B cell (primary cell): ENCODE measurements at regions of chr13 and their contacts with region 1.

Region 1: DNA sequence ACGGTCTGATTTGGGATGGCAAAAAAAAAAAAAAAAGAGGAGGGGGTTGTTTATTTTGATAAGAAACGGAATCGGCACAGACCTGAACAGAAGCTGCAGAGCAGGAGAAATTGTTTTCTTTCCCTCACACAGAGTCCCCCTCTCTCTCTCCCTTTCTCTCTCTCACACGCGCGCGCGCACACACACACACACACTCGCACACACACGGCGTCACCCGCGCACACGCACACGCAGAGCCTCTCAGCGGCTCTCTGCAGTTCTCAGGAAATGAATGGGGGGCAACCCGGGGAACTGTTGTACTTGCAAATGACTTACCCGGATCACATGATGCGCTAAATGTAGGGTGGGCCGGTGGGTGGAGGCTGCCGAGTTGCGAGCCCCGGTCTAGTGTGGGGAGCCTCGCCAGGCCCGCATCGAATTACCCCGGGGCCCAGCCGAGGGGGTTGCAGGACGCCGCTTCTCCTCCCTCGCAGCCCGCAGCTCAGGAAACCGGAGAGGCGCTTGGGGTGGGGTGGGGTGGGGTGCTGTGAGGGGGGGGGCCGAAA is 475 bp downstream of the KLF12 start:
- DNase-seq: peak; percentile 97
- ATAC-seq: peak; percentile 53
- H3K4me3 ChIP-seq: peak overlapping the region; percentile 78 to 91 (median 81)
- H3K4me3 Mint-ChIP-seq: peak overlapping the region; percentile 99
- H3K27ac ChIP-seq: peak overlapping the region; percentile 87 to 95
- H3K27ac Mint-ChIP-seq: peak overlapping the region; percentile 100
- H3K4me1 ChIP-seq: peaks cover 33 to 35% of the 10 kb centered on the region in 2 donors
- H3K4me1 Mint-ChIP-seq: peaks cover 39% of the 10 kb centered on the region
- H3K27me3 ChIP-seq: no peaks in the 10 kb centered on the region
- H3K27me3 Mint-ChIP-seq: no peaks in the 10 kb centered on the region
- CTCF ChIP-seq: no peak

Region 2: DNA sequence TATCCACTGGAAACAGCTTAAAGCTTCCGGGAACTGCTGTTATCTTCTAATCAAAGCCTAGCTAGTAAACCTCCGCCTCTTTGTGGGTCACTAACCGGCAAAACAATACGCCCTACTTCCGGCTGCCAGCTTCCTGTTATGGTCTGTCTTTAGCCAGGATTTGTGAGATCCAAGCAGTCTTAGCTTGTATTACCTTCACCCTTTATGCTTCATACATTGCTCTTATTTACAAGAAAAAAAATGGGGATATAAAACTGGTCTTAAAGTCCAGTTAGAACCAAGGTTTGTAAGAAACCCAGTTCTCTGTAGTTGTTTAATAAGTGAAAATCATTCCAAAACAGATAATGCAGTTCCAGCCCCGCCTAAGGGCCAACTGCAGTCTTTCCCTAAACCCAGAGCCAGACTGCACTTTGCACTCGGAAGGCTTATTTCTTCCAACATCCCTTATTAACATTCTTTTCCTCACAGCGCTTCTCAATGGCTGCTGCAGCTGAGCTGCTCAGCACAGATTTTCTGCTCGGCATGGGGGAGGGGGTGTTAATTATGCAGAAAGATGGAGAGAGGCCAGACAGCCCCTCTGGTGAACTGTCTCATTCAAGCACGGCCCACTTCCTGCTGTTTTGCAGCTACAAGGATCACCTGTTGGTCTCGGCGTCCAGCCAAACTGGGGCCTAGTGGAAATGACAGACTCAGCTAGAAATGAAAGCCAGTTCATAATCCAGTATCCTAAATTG is 367.9 kb before region 1 on chr13:
- CTCF ChIA-PET with region 1: interaction called, 3 read pairs
- POLR2A ChIA-PET with region 1: interaction called, 5 read pairs
- intact Hi-C with region 1: loop called (anchors 2 kb)
- DNase-seq: peak; percentile 65
- ATAC-seq: peak; percentile 79
- H3K4me3 ChIP-seq: peak overlapping the region in 4 of 5 experiments; percentile 0 to 43 (median 16)
- H3K4me3 Mint-ChIP-seq: peak overlapping the region; percentile 78
- H3K27ac ChIP-seq: peak overlapping the region; percentile 83 to 92
- H3K27ac Mint-ChIP-seq: peak overlapping the region; percentile 94
- H3K4me1 ChIP-seq: peaks cover 51 to 60% of the 10 kb centered on the region in 2 donors
- H3K4me1 Mint-ChIP-seq: peaks cover 71% of the 10 kb centered on the region
- H3K27me3 ChIP-seq: no peaks in the 10 kb centered on the region
- H3K27me3 Mint-ChIP-seq: no peaks in the 10 kb centered on the region
- CTCF ChIP-seq: no peak

Region 3: DNA sequence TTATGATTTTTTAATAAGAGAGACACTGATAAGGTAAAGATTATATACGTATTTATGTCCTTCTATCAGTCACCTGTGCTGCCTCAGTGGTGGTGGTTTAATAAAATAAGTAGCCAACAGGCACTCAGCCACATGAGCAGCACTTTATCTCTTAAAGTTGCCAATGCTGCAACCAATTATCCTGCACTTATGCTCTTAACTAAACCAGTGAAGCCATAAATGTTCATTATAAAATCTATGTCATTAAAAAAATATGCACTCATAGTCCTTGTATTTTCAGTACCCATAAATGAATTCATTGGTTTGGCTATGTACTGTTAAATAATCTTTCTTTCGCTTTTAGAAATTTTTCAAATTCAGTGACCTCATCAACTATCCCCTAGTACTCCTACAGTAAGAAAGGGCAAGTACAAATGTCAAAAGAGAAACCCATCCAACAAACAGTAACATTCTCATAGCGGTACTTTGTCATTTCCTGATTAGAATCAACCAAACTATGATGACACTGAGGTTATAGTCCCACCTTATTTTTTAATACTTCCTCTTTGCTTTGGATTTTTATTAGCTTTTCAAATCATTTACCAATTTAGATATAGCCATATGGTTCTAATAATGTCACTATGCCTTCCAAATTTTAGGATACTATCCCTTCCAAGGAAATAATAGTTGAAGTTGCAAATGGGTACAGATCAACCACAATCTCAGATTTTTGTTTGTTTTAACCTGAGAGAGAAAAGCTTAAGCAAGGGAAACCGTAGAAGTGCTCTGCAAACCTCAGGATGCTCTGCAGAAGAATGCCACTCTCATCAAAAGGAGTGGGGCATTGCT is 190.4 kb before region 1 on chr13:
- CTCF ChIA-PET with region 1: no interaction called
- POLR2A ChIA-PET with region 1: no interaction called
- intact Hi-C with region 1: loop called (anchors 5 kb)
- DNase-seq: peak; percentile 20
- ATAC-seq: peak; percentile 81
- H3K4me3 ChIP-seq: no peak overlapping the region
- H3K4me3 Mint-ChIP-seq: peak overlapping the region; percentile 6
- H3K27ac ChIP-seq: no peak overlapping the region
- H3K27ac Mint-ChIP-seq: peak overlapping the region; percentile 8
- H3K4me1 ChIP-seq: peaks cover 0 to 3% of the 10 kb centered on the region in 2 donors
- H3K4me1 Mint-ChIP-seq: peaks cover 53% of the 10 kb centered on the region
- H3K27me3 ChIP-seq: no peaks in the 10 kb centered on the region
- H3K27me3 Mint-ChIP-seq: no peaks in the 10 kb centered on the region
- CTCF ChIP-seq: no peak

Region 4: GRCh38 chr13:74026753-74027152 is 107.0 kb before region 1 on chr13:
- CTCF ChIA-PET with region 1: no interaction called
- POLR2A ChIA-PET with region 1: interaction called, 5 read pairs
- intact Hi-C with region 1: loop called (anchors 10 kb)
- DNase-seq: peak; percentile 75
- ATAC-seq: peak; percentile 93
- H3K4me3 ChIP-seq: peak overlapping the region; percentile 7 to 52 (median 18)
- H3K4me3 Mint-ChIP-seq: peak overlapping the region; percentile 79
- H3K27ac ChIP-seq: peak overlapping the region; percentile 71 to 85
- H3K27ac Mint-ChIP-seq: peak overlapping the region; percentile 89
- H3K4me1 ChIP-seq: peaks cover 20 to 43% of the 10 kb centered on the region in 2 donors
- H3K4me1 Mint-ChIP-seq: peaks cover 72% of the 10 kb centered on the region
- H3K27me3 ChIP-seq: no peaks in the 10 kb centered on the region
- H3K27me3 Mint-ChIP-seq: no peaks in the 10 kb centered on the region
- CTCF ChIP-seq: no peak

Region 5: GRCh38 chr13:74090869-74091605 is 42.7 kb before region 1 on chr13:
- CTCF ChIA-PET with region 1: no interaction called
- POLR2A ChIA-PET with region 1: no interaction called
- intact Hi-C with region 1: loop called (anchors 5 kb)
- DNase-seq: no peak
- ATAC-seq: no peak
- H3K4me3 ChIP-seq: no peak overlapping the region
- H3K4me3 Mint-ChIP-seq: peak overlapping the region; percentile 53
- H3K27ac ChIP-seq: no peak overlapping the region
- H3K27ac Mint-ChIP-seq: peak overlapping the region; percentile 64
- H3K4me1 ChIP-seq: peaks cover 20 to 39% of the 10 kb centered on the region in 2 donors
- H3K4me1 Mint-ChIP-seq: peaks cover 57% of the 10 kb centered on the region
- H3K27me3 ChIP-seq: no peaks in the 10 kb centered on the region
- H3K27me3 Mint-ChIP-seq: no peaks in the 10 kb centered on the region
- CTCF ChIP-seq: no peak

Region 6: DNA sequence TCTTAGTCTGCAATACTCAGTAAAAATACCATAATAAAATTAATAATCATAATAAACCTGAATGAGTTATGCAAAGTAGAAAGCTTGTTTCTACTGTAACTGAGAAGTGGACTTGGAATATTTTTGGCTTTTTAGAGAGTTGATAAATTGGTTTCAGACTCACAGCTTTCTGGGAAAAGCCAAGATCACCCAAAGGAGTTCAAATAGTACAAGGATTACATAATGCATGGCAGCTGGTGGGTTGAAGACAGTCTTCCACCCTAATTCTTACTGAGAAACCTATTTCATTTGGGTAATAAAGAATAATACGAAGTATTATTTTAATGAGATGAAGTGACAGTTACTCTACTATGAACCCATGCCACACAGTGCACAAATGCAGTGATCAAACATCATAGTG is 139.9 kb after region 1 on chr13:
- CTCF ChIA-PET with region 1: no interaction called
- POLR2A ChIA-PET with region 1: no interaction called
- intact Hi-C with region 1: no loop called
- DNase-seq: no peak
- ATAC-seq: no peak
- H3K4me3 ChIP-seq: no peak overlapping the region
- H3K4me3 Mint-ChIP-seq: no peak overlapping the region
- H3K27ac ChIP-seq: no peak overlapping the region
- H3K27ac Mint-ChIP-seq: no peak overlapping the region
- H3K4me1 ChIP-seq: no peaks in the 10 kb centered on the region
- H3K4me1 Mint-ChIP-seq: no peaks in the 10 kb centered on the region
- H3K27me3 ChIP-seq: peaks cover 0 to 6% (median 2%) of the 10 kb centered on the region in 4 experiments
- H3K27me3 Mint-ChIP-seq: peaks cover 3% of the 10 kb centered on the region
- CTCF ChIP-seq: no peak

Region 7: GRCh38 chr13:74847966-74848365 is 714.2 kb after region 1 on chr13:
- CTCF ChIA-PET with region 1: no interaction called
- POLR2A ChIA-PET with region 1: no interaction called
- intact Hi-C with region 1: no loop called
- DNase-seq: no peak
- ATAC-seq: no peak
- H3K4me3 ChIP-seq: no peak overlapping the region
- H3K4me3 Mint-ChIP-seq: no peak overlapping the region
- H3K27ac ChIP-seq: no peak overlapping the region
- H3K27ac Mint-ChIP-seq: no peak overlapping the region
- H3K4me1 ChIP-seq: no peaks in the 10 kb centered on the region
- H3K4me1 Mint-ChIP-seq: no peaks in the 10 kb centered on the region
- H3K27me3 ChIP-seq: no peaks in the 10 kb centered on the region
- H3K27me3 Mint-ChIP-seq: no peaks in the 10 kb centered on the region
- CTCF ChIP-seq: no peak

Region 8: DNA sequence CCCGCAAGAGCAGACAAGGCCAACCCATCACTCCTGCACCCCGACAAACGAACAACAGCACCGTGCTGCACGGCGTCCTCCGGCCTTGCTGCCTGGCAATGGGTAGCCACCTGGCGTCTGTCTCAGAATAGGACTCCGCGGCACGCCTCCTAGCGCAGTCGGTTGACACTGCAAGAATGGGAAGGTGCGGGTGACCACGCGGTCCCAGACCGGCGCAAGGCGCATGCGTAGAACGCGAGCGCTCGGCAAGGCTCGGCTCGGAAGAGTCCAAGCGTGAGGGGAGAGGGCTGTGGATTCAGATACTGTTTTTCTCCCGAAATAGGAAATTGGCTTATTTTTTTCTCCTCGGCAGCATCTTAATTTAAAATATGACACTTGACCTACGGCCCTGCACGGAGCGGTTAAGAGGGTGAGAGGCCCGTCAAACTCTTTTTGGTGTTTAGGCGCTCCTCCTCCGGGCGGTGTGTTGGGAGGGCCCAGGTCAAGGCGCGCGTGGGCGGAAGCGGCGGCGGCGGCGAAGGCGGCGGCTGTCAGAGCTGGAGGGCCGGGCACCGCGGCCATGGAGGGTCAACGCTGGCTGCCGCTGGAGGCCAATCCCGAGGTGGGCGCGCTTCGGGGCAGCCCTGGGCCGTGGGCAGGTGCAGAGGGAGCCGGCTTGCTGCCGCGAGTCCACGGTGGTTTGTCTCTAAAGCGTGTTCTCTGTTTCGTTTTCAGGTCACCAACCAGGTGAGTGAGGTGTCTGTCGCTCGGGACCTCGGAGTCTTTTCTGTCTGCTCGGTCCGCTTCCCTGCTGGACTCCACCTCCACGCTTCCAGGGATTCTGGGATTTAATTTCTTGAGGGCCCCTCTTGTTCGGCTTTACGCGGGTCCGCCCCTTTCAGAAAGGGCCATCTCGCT is 1415.8 kb after region 1 on chr13 and contains the start of gene UCHL3:
- CTCF ChIA-PET with region 1: no interaction called
- POLR2A ChIA-PET with region 1: no interaction called
- intact Hi-C with region 1: loop called (anchors 5 kb)
- DNase-seq: peak; percentile 98
- ATAC-seq: peak; percentile 92
- H3K4me3 ChIP-seq: peak within 1 kb of the TSS; percentile 67 to 96 (median 93)
- H3K4me3 Mint-ChIP-seq: peak within 1 kb of the TSS; percentile 95
- H3K27ac ChIP-seq: peak within 1 kb of the TSS; percentile 81 to 92
- H3K27ac Mint-ChIP-seq: peak within 1 kb of the TSS; percentile 99
- H3K4me1 ChIP-seq: peaks cover 13 to 14% of the 10 kb centered on the region in 2 donors
- H3K4me1 Mint-ChIP-seq: peaks cover 30% of the 10 kb centered on the region
- H3K27me3 ChIP-seq: no peaks in the 10 kb centered on the region
- H3K27me3 Mint-ChIP-seq: no peaks in the 10 kb centered on the region
- CTCF ChIP-seq: peak; percentile 89
- total RNA-seq, gene UCHL3: 13.5 and 16.8 TPM in 2 replicates